ENCODE measurements at regions of chr3 and their contacts with region 1.

Region 1: DNA sequence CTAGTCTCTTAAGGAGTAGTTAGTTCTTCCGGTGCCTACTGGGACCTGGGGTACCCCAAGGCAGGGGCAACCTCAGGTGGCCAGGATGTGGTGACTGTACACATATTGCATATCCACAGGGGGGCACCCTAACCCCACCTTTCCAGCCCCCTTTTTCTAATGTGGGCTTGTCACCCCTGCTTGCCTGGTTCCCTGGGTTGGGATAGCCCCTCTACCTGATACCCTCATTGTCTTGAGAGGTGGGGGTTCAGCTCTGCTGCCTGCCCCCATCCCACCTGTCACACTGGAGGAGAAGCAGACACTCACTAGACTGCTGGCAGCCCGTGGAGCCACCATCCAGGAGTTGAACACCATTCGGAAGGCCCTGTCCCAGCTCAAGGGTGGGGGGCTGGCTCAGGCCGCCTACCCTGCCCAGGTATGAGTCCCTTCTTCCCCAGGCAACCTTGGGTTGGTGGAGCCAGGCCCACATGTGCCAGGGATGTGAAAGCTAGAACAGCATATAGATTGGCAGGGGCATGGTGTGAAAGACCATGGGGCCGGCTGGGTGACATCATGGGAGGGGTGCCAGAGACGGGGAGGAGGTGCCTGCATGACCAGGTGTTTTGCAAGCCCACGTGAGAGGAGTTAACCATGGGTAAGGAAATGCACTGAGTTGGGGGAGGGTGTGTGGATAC is 4.0 kb downstream of the GLYCTK start:
- DNase-seq: peak; percentile 39 to 65 (median 57)
- H3K4me3 ChIP-seq: no peak overlapping the region
- H3K27ac ChIP-seq: no peak overlapping the region
- H3K4me1 ChIP-seq: peaks cover 3 to 33% (median 19%) of the 10 kb centered on the region in 4 experiments
- H3K27me3 ChIP-seq: no peaks in the 10 kb centered on the region

Region 2: DNA sequence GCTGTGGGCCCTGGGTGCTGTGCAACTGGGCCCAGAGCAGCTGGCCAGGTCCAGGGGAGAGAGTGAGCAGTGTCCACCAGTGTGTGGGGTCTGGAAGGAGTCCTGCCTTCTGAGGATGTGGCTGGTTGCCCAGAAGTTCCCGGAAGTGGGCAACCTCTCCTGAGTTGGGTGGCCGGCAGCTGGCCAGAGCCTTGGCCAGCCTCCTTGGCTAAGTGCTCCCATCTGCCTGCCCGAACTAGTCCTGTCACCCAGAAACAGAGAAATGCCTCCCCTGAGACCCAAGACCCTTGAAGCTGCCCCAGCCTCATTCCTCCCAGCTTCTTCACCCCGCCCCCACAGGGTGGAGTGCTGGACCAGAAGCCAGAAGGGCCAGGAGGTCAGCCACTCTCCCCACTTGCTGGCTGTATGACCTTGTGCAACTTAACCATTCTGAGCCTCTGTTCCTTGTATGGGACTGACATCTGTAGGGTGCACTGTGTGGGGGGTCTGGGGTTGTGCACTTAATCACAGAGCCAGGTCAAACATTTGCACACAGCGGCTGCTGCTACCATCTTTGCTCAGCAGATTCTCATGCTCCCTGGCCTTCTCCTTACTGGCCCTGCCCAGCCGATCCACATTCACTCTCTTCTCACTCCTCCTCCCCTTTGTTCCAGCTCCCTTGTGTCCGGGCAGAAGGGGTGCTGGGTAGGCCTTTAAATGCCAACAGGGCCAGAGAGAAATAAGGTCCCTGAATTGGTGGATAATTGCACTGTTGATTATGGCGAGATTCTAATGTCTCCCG is 101.2 kb before region 1 on chr3:
- CTCF ChIA-PET with region 1: no interaction called
- POLR2A ChIA-PET with region 1: no interaction called
- DNase-seq: no peak
- H3K4me3 ChIP-seq: no peak overlapping the region
- H3K27ac ChIP-seq: no peak overlapping the region
- H3K4me1 ChIP-seq: peaks cover 11 to 42% (median 30%) of the 10 kb centered on the region in 4 experiments
- H3K27me3 ChIP-seq: no peaks in the 10 kb centered on the region

Region 3: DNA sequence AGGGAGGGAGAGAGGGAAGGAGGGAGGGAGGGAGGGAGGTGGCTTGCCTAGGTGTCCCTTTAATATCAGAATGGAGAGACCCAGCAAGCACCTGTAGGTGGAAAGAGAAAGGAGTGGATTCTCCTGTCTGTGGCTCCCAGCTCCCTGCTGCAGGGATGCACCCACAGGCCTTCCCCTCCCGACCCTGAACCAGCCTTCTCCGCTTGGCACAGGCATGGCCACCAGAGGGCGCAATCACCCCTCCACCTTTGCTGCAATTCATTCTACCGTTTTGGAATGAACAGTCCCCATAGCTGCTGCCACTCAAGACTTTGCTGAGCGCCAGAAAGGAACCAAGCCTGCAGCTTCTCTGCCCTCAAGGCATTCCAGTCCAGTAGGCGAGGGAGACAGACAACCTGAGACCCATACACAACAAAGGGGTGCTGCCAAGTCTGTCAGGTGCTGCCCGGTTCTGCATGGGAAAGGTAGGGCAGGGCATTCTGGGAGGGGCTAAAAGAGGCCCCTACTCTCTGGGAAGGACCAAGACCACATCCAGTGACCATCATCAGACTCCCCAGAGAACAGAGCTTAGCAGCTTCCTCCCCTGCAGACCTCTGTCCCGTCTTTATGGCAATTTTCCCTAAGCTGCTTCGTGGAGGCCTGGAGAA is 71.1 kb before region 1 on chr3:
- CTCF ChIA-PET with region 1: interaction called, 65 read pairs
- POLR2A ChIA-PET with region 1: no interaction called
- DNase-seq: peak; percentile 79 to 90 (median 84)
- H3K4me3 ChIP-seq: no peak overlapping the region
- H3K27ac ChIP-seq: no peak overlapping the region
- H3K4me1 ChIP-seq: peaks cover 10 to 80% (median 59%) of the 10 kb centered on the region in 4 experiments
- H3K27me3 ChIP-seq: no peaks in the 10 kb centered on the region

Region 4: GRCh38 chr3:52350416-52350815 is 58.8 kb after region 1 on chr3:
- CTCF ChIA-PET with region 1: interaction called, 471 read pairs
- POLR2A ChIA-PET with region 1: no interaction called
- DNase-seq: no peak
- H3K4me3 ChIP-seq: no peak overlapping the region
- H3K27ac ChIP-seq: no peak overlapping the region
- H3K4me1 ChIP-seq: no peaks in the 10 kb centered on the region
- H3K27me3 ChIP-seq: no peaks in the 10 kb centered on the region

Measured in common myeloid progenitor, CD34-positive (primary cell).